ENCODE measurements at regions of chr11 and their contacts with region 1.

Region 1: DNA sequence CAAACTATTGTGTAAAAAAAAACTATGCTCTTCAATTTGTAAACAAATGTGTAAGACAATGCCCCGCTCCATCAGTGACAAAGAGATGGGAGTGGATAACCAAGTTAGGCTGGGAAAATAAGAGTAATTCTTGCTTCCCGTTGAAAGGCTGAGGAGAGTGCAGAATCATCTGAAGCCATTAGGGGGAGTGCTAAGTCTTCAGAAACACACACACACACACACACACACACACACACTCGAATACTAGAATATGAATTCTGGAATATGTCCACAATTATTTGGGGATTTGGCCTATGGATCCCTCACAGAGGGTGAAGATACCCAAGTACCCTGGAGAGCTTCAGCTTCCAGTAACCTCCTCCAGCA is 27.8 kb upstream of the ROBO3 start:
- DNase-seq: peak; percentile 56
- H3K4me3 ChIP-seq: no peak overlapping the region
- CTCF ChIP-seq: peak; percentile 67

Region 2: DNA sequence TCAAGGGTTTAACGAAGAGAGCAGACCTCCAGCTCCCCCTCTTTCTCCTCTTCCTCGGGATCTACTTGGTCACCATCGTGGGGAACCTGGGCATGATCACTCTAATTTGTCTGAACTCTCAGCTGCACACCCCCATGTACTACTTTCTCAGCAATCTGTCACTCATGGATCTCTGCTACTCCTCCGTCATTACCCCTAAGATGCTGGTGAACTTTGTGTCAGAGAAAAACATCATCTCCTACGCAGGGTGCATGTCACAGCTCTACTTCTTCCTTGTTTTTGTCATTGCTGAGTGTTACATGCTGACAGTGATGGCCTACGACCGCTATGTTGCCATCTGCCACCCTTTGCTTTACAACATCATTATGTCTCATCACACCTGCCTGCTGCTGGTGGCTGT is 267.3 kb before region 1 on chr11:
- CTCF ChIA-PET with region 1: no interaction called
- POLR2A ChIA-PET with region 1: no interaction called
- DNase-seq: no peak
- H3K4me3 ChIP-seq: no peak overlapping the region
- CTCF ChIP-seq: no peak

Region 3: DNA sequence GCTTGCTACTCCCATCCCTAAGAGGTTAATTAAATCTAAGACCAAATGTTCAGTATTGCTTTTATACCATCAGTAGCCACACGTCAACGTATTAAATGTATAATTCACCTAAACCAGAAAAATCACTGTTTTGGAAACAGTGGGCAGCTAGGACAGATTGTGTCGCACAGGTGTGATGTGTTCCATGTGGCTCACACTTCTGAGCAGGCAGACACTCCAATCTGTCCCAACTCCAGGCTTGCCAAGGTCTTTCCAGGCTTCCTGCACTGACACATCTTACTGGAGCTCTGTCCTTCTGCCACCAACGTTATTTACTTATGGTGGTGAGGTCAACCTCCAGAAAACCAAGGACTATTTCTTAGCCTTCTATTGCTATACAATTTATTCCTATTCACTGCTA is 175.4 kb before region 1 on chr11:
- CTCF ChIA-PET with region 1: interaction called, 16 read pairs
- POLR2A ChIA-PET with region 1: no interaction called
- DNase-seq: no peak
- H3K4me3 ChIP-seq: no peak overlapping the region
- CTCF ChIP-seq: no peak

Region 4: GRCh38 chr11:124758317-124759203 is 78.9 kb before region 1 on chr11:
- CTCF ChIA-PET with region 1: interaction called, 18 read pairs
- POLR2A ChIA-PET with region 1: no interaction called
- DNase-seq: no peak
- H3K4me3 ChIP-seq: peak overlapping the region; percentile 39
- CTCF ChIP-seq: peak; percentile 88

Region 5: GRCh38 chr11:124793466-124794278 is 43.8 kb before region 1 on chr11:
- CTCF ChIA-PET with region 1: interaction called, 38 read pairs
- POLR2A ChIA-PET with region 1: interaction called, 3 read pairs
- DNase-seq: no peak
- H3K4me3 ChIP-seq: no peak overlapping the region
- CTCF ChIP-seq: peak; percentile 56

Region 6: DNA sequence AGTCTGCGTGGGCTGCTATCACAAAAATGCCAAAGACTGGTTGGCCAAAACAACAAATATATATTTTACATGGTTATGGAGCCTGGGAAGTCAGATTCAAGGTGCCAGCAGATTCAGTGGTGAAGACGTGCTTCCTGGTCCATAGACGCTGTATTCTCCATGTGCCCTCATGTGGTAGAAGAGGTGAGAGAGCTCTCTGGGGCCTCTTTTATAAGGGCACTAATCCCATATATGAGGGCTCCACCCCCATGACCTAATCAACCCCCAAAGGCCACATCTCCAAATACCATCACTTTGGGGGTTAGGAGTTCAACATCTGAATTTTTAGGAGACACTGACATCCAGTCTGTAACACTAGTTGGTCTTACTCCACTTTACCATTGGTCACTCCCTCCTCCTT is 18.0 kb after region 1 on chr11:
- CTCF ChIA-PET with region 1: interaction called, 45 read pairs
- POLR2A ChIA-PET with region 1: no interaction called
- DNase-seq: no peak
- H3K4me3 ChIP-seq: no peak overlapping the region
- CTCF ChIP-seq: no peak

Region 7: DNA sequence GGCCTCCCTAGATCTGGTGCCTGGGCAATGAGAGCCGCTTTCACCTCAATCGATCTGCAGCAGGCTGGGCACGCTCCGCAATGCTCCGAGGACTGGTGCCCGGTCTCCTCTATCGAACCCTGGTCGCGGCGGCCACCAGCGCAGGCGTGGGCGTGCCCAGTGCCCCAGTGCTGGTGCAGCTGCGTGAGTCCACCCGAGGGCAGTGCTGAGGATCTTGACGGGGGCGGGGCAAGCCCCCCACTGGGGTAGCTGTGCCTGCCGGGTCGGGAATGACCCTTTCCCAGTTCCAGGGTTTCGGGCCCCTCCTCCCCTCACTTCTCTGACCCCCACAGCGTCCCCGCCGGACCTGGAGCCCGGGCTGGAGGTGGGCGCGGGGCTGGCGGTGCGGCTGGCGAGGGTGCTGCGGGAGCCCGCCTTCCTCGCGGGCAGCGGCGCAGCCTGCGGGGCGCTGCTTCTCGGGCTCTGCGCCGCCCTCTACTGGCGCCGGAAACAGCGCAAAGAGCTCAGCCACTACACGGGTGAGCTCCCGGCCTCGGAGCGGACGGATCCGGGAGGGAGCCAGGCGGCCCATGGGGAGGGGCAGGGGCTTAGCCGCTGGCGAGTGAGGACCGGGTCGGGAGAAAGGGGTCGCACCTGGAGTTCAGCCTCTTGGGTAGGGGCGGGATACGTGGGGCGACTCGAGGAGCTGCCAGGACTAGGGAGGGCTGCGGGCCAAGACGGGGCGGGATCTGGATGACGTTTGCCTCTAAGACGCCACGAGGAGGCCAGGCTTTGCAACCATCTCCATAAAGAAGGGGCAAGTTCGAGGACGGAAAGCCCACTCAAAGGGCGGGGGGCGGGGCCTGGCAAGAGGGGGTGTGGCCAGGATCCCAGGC is 38.7 kb after region 1 on chr11:
- CTCF ChIA-PET with region 1: interaction called, 31 read pairs
- POLR2A ChIA-PET with region 1: interaction called, 3 read pairs
- DNase-seq: peak; percentile 53
- H3K4me3 ChIP-seq: peak overlapping the region; percentile 72
- CTCF ChIP-seq: peak; percentile 94